OCI-LY7 (cell line): ENCODE measurements at regions of chr2 and their contacts with region 1.

Region 1: GRCh38 chr2:72973566-72974435 is 56.5 kb downstream of the EMX1 start:
- DNase-seq: peak; percentile 75
- H3K4me3 ChIP-seq: no peak overlapping the region
- H3K27ac ChIP-seq: no peak overlapping the region
- H3K4me1 ChIP-seq: no peaks in the 10 kb centered on the region
- CTCF ChIP-seq: peak; percentile 87

Region 2: DNA sequence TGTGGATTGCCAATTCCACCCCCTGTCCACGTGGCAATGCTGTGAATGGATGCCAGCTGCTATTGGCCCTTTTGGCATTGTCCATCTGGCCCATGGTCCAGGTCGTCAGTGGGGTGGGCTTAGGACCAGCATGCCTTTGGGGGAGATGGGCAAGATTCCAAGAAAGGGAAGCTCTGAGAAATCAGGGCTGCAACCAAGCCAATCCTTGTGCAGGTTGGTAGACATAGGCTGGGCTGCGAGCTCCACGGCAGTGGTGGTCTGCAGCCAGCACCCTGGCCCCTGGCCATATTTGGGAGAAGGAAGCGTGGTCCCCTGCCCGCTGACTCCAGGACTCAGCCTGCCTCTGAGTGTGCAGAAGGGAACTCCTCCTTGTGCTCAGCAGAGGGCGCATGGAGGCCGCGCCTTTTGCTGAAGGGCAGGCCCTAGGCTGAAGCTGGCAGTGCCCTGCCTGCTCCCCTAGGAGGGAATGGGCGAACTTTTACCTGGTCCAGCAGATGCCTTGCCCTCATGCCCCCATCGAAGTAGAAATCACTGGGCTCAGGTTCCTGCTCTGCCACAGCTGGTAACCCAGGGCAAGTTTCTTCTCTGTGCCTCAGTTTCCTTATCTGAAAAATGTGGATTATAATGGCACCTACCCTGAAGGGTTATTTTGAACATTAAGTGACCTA is 81.2 kb before region 1 on chr2:
- CTCF ChIA-PET with region 1: no interaction called
- POLR2A ChIA-PET with region 1: interaction called, 5 read pairs
- intact Hi-C with region 1: loop called (anchors 1 kb)
- DNase-seq: peak; percentile 70
- H3K4me3 ChIP-seq: no peak overlapping the region
- H3K27ac ChIP-seq: no peak overlapping the region
- H3K4me1 ChIP-seq: no peaks in the 10 kb centered on the region
- CTCF ChIP-seq: peak; percentile 79

Region 3: DNA sequence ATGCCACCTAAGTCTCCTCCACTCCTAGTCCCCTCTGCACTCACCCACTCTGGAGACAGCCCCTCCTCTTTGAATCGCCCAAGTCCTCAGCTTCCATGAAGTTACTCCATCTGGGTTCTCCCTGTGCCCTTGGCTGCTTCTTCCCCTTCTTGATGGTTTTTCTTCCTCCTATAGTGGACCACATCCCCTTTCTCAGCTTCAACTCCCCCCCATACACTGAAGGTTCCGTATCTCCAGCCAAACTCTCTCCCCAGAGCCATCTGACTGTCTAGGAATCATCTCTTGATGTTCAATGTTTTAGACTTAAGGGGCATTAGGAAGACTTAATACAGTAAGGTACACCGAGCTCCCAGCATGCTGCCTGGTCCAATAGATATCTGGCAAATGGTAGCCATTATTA is 16.9 kb before region 1 on chr2:
- CTCF ChIA-PET with region 1: no interaction called
- POLR2A ChIA-PET with region 1: no interaction called
- intact Hi-C with region 1: no loop called
- DNase-seq: no peak
- H3K4me3 ChIP-seq: no peak overlapping the region
- H3K27ac ChIP-seq: no peak overlapping the region
- H3K4me1 ChIP-seq: peaks cover 9% of the 10 kb centered on the region
- CTCF ChIP-seq: no peak